Activated naive CD4-positive, alpha-beta T cell treated with anti-CD3 and anti-CD28 coated beads for 36 hours (primary cell): ENCODE measurements at regions of chr4 and their contacts with region 1.

Region 1: DNA sequence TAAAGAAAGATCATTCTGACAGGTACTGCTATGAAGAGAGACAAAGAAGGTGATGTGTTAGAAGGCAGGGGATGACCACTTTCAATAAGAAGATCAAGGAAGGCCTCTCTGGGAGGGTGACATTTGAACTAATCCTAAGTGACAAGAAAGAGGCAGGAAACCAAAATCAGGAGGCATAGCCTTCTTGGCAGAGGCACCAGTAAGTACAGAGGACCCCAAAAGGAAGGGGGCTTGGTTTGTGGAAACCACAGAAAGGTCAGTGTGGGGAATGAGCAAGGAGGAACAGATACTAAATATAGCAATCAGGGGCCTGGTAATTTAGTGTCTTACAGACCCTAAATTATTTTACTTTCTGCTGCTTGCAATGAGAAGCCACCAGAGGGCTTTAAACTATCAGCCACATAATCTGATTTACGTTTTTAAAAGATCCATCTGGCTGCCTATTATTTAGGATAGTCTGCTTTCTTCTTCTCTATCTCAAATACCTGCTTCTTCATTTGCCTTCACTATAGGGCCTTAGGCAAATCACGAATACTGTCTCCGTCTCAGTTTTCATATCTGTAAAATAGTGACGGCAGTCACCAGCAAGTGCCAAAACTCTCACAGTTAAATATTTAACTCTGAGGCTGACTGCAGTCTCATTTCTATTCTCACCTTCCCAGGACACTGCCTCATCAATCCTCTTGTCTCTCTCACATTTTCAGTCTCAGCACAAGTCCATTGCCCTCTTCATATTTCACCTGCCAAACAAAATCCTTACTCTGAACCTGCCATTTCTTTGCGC is 16.7 kb downstream of the NR3C2 start:
- DNase-seq: no peak
- H3K4me3 Mint-ChIP-seq: no peak overlapping the region
- H3K27ac Mint-ChIP-seq: no peak overlapping the region
- H3K4me1 Mint-ChIP-seq: peaks cover 73% of the 10 kb centered on the region
- H3K27me3 Mint-ChIP-seq: no peaks in the 10 kb centered on the region

Region 2: DNA sequence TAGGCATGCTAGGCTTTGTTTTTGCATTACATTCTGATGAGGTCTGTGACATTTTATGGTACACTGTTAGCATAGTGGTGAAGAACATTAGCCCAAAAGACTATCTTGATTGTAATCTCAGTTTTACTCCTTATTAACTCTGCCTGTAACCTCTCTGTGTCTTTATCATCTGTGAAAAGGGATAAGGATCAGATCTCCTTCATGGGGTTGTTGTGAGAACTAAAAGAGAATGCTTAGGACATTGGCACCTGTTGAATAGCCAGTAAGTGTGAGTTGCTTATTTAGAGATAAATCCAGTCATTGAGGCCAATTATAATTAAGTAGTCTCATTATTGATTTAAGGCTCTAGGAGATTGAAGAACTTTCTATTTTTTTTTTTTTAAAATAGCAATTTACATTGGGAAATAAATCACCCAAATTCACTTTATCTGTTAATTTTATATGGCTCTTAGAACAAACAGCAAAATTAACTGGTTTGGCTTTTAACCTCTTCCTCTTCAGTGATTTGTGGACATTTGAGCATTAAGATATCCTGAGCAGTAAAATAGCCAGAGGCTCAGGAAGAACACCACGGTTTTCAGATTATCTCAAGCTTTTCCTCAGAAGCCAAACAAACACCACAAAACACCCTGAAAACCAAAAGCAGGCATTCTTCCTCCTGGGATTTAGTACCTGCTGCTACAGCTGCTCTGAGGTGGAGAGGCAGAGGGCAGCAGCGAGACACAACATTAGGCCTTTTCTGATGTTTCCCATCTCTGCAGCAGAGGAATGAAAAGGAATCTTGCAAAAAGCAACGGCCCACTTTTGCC is 500.7 kb before region 1 on chr4:
- CTCF ChIA-PET with region 1: no interaction called
- intact Hi-C with region 1: loop called (anchors 10 kb)
- DNase-seq: peak; percentile 35
- H3K4me3 Mint-ChIP-seq: no peak overlapping the region
- H3K27ac Mint-ChIP-seq: no peak overlapping the region
- H3K4me1 Mint-ChIP-seq: no peaks in the 10 kb centered on the region
- H3K27me3 Mint-ChIP-seq: no peaks in the 10 kb centered on the region

Region 3: DNA sequence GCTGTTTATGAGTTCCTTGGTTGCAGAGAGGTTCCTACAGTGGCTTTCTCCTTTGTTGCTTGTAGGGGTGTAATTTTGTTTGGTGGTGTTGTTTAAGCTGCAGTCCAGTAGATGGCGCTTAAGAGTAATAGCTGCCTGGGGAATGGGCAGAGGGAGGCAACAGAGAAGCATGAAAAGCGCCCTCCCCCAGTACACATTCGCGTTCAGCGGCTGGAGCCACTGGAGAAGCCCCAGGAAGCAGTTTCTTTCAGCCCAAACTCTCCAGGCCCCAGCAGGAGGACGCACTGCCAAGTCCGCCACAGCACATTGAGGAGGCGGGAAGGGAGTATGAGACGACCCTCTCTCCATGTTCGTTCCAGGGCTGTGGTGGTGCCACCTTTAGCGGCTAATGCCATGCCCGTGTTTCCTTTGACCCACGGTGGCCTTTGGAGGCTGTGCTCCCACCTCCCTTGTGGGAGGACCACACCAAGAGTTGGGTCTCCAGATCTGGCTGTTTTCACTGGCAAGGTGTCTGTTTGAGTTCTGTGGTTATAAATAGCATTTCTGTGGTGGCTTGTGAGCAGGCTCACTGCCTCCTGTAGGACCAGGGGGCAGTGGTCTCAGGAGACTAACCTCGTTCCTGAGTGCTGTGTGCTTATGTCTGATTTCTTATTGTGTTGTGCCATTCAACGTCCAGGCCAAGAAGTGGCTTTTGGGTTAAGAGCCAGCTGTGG is 441.3 kb before region 1 on chr4:
- CTCF ChIA-PET with region 1: no interaction called
- intact Hi-C with region 1: loop called (anchors 1 kb)
- DNase-seq: peak; percentile 19
- H3K4me3 Mint-ChIP-seq: no peak overlapping the region
- H3K27ac Mint-ChIP-seq: no peak overlapping the region
- H3K4me1 Mint-ChIP-seq: peaks cover 9% of the 10 kb centered on the region
- H3K27me3 Mint-ChIP-seq: no peaks in the 10 kb centered on the region

Region 4: DNA sequence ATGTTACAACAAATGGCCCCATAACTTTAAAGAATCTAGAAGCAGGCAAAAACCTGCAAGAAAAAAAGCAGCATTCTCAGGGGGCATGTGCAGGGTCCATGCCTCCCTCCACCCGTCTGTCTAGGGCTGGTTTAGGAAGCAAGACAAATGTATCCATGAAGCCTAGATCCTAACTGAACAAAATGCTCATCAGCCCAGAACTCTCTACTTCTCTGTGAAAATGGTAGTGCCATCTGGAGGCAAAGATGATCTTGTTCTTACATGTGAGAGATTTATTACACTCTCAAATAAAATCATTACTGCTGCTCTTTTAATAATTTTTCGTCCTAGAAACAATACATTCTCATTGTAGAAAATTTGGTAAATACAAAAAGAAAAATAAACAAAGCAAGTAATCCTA is 10.0 kb before region 1 on chr4:
- CTCF ChIA-PET with region 1: no interaction called
- intact Hi-C with region 1: loop called (anchors 1 kb)
- DNase-seq: no peak
- H3K4me3 Mint-ChIP-seq: no peak overlapping the region
- H3K27ac Mint-ChIP-seq: no peak overlapping the region
- H3K4me1 Mint-ChIP-seq: peaks cover 60% of the 10 kb centered on the region
- H3K27me3 Mint-ChIP-seq: no peaks in the 10 kb centered on the region

Region 5: DNA sequence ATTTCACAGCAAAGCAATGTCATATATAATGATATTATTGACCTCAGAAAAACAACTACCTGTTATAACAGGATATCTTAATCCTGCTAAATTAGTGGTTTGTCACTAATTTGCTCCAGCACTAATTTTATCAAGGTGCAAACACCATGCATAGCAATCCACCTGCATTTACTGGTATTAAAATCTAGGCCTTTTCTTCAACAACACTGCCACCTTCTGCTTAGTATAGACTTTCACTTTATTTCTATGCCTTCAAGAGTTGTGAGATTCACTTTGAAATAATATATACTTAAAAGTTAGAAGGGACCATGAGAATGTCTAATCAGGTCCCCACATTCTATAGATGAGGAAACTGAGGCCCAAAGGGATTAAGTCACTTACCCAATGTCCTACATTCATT is 1472.3 kb after region 1 on chr4:
- CTCF ChIA-PET with region 1: no interaction called
- intact Hi-C with region 1: loop called (anchors 5 kb)
- DNase-seq: no peak
- H3K4me3 Mint-ChIP-seq: no peak overlapping the region
- H3K27ac Mint-ChIP-seq: no peak overlapping the region
- H3K4me1 Mint-ChIP-seq: no peaks in the 10 kb centered on the region
- H3K27me3 Mint-ChIP-seq: no peaks in the 10 kb centered on the region